Esophagus squamous epithelium (tissue), 5 donors: ENCODE measurements at regions of chr10 and their contacts with region 1.

Region 1: GRCh38 chr10:114437456-114438292 is 33.4 kb upstream of the AFAP1L2 start:
- DNase-seq: no peak
- H3K4me3 ChIP-seq: no peak overlapping the region
- H3K27ac ChIP-seq: no peak overlapping the region
- H3K4me1 ChIP-seq: no peaks in the 10 kb centered on the region
- H3K27me3 ChIP-seq: no peaks in the 10 kb centered on the region
- CTCF ChIP-seq: peak in 5 of 6 experiments; percentile 27 to 62 (median 45)
- POLR2A ChIP-seq: no peak

Region 2: DNA sequence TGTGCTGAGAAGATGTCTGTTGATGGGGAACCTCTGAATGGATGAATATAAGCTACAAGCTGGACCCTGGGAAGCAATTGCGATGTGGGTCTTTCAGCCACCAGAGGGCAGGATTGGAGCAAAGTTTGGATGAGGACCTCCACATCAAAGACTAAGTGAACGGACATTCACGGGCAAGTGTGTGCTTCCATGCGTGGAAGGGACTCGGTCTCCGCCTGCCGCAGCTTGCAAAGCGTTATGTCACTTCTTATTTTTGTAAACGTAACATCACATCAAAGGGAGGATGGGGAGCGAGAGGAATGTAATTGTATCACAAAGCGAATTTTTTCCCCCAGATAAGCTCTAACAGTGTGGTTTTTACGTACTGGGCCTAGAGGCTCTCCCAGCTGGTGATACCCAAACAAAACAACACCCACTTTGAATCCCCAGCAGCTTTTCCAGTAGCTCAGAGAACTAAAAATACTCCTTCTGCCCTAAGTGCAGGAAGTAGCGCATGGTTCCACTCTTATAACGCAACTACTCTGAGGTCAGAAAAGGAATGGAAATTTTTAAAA is 133.6 kb before region 1 on chr10:
- intact Hi-C with region 1: loop called (anchors 10 kb)
- DNase-seq: no peak
- H3K4me3 ChIP-seq: peak overlapping the region; percentile 8 to 59 (median 38)
- H3K27ac ChIP-seq: peak overlapping the region in 3 of 4 donors; percentile 15 to 68 (median 68)
- H3K4me1 ChIP-seq: peaks cover 7 to 38% (median 8%) of the 10 kb centered on the region in 3 donors
- H3K27me3 ChIP-seq: no peaks in the 10 kb centered on the region
- CTCF ChIP-seq: peak; percentile 70 to 86 (median 76)
- POLR2A ChIP-seq: no peak